ENCODE measurements at regions of chr3 and their contacts with region 1.

Region 1: DNA sequence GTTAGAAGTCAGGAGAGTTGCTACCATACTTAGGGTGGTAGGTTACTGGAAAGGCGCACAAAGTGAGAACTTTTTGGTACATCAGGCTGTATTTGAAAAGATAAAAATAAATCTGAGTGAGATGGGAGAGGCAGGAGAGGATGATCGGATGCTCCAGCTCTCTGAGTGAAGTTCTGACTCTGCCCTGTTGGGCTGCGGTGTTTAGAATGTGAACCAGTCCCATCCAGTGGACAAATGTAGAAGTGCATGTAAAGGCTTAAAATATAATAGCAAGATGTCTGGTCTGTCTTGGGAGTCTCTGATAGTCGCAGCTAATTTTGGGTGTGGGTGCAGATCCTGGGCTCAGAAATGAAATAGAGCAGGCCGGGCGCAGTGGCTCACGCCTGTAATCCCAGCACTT is 30.4 kb downstream of the ACKR2 start:
- DNase-seq: peak; percentile 87
- ATAC-seq: peak; percentile 99
- H3K4me3 ChIP-seq: peak overlapping the region; percentile 57
- H3K27ac ChIP-seq: no peak overlapping the region
- H3K4me1 ChIP-seq: peaks cover 6% of the 10 kb centered on the region; the same call in 1 of the 2 replicates
- H3K27me3 ChIP-seq: no peaks in the 10 kb centered on the region
- CTCF ChIP-seq: peak; percentile 75

Region 2: DNA sequence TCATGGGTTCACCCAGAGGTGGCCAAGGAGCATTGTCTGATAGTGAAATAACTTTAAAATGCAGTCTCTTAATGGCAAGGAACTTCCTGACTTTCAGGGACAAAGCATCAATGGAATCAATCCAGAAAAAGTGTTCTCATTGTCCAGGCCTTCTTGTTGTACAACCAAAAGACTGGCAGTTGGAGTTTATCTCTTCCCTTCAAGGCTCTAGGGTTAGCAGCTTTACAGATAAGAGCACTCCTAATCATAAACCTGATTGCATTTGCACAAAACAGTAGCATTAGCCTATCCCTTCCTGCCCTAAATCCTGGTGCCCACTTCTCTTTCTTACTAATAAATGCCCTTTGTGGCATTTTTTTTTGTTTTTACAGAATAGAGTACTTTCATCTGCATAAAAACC is 380.5 kb before region 1 on chr3:
- CTCF ChIA-PET with region 1: no interaction called
- POLR2A ChIA-PET with region 1: no interaction called
- intact Hi-C with region 1: no loop called
- DNase-seq: no peak
- ATAC-seq: no peak
- H3K4me3 ChIP-seq: no peak overlapping the region
- H3K27ac ChIP-seq: no peak overlapping the region
- H3K4me1 ChIP-seq: no peaks in the 10 kb centered on the region
- H3K27me3 ChIP-seq: no peaks in the 10 kb centered on the region
- CTCF ChIP-seq: no peak

Region 3: GRCh38 chr3:42652611-42653302 is 186.9 kb before region 1 on chr3:
- CTCF ChIA-PET with region 1: interaction called, 17 read pairs
- POLR2A ChIA-PET with region 1: no interaction called
- intact Hi-C with region 1: no loop called
- DNase-seq: peak; percentile 90
- ATAC-seq: peak; percentile 75
- H3K4me3 ChIP-seq: peak overlapping the region; percentile 85
- H3K27ac ChIP-seq: peak overlapping the region; percentile 53
- H3K4me1 ChIP-seq: peaks cover 28% of the 10 kb centered on the region
- H3K27me3 ChIP-seq: no peaks in the 10 kb centered on the region
- CTCF ChIP-seq: no peak

Region 4: GRCh38 chr3:42880601-42881451 is 41.2 kb after region 1 on chr3:
- CTCF ChIA-PET with region 1: interaction called, 4 read pairs
- POLR2A ChIA-PET with region 1: no interaction called
- intact Hi-C with region 1: loop called (anchors 1 kb)
- DNase-seq: peak; percentile 88
- ATAC-seq: peak; percentile 97
- H3K4me3 ChIP-seq: peak overlapping the region; percentile 68
- H3K27ac ChIP-seq: no peak overlapping the region
- H3K4me1 ChIP-seq: peaks cover 20% of the 10 kb centered on the region
- H3K27me3 ChIP-seq: no peaks in the 10 kb centered on the region
- CTCF ChIP-seq: peak; percentile 88

Measured in PC-3 (cell line).